Heart right ventricle (tissue), 16 donors: ENCODE measurements at regions of chr6 and their contacts with region 1.

Region 1: DNA sequence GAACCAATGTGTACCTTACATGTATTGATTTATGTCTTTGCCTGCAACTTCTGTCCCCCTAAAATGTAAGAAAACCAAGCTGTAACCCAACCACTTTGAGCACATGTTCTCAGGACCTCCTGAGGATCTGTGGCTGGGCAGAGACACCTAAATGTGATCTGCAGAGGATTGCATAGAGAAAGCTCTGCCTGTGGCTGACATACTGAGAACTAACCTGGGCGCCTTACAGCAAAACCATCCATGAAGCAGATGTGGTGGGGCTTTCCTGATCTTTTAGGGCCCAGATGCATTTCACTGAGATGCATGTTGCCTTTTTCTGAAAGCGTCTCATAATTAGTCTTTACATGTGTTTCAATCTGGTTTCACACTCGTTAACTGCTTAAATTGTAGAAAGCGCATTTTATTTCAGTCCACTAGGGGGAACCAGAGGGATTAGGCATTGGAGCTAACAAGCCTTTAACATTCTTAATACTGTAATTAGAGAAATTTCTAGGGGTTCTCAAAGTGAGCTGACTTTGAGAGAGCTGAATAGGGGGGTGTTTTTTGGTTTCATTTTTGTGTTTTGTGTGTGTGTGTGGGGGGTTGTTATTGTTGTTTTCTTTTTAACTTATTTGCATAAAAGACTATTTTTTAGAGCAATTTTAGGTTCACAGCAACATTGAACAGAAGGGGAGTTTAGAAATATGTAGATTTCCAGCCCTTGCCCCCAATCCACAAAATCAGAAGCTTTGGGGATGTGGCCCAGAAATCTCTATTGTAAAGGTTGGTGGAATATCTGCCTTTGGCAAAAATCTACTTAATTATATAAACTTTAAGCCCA is 50.9 kb upstream of the FAM184A start:
- DNase-seq: peak in 1 of 2 donors; percentile 30
- ATAC-seq: peak in 5 of 8 donors; percentile 46 to 75 (median 62)
- H3K4me3 ChIP-seq: no peak overlapping the region
- H3K27ac ChIP-seq: no peak overlapping the region
- H3K4me1 ChIP-seq: peaks cover 0 to 19% (median 5%) of the 10 kb centered on the region in 9 donors
- H3K27me3 ChIP-seq: no peaks in the 10 kb centered on the region
- CTCF ChIP-seq: peak; percentile 78 to 89 (median 82)

Region 2: GRCh38 chr6:119653329-119653728 is 524.0 kb after region 1 on chr6:
- intact Hi-C with region 1: loop called in 1 of 10 experiments (anchors 10 kb)
- DNase-seq: no peak
- ATAC-seq: no peak
- H3K4me3 ChIP-seq: no peak overlapping the region
- H3K27ac ChIP-seq: no peak overlapping the region
- H3K4me1 ChIP-seq: no peaks in the 10 kb centered on the region
- H3K27me3 ChIP-seq: no peaks in the 10 kb centered on the region
- CTCF ChIP-seq: no peak

Region 3: GRCh38 chr6:119736296-119737021 is 607.1 kb after region 1 on chr6:
- intact Hi-C with region 1: loop called in 1 of 10 experiments (anchors 10 kb)
- DNase-seq: no peak
- ATAC-seq: no peak
- H3K4me3 ChIP-seq: no peak overlapping the region
- H3K27ac ChIP-seq: no peak overlapping the region
- H3K4me1 ChIP-seq: no peaks in the 10 kb centered on the region
- H3K27me3 ChIP-seq: no peaks in the 10 kb centered on the region
- CTCF ChIP-seq: no peak

Region 4: DNA sequence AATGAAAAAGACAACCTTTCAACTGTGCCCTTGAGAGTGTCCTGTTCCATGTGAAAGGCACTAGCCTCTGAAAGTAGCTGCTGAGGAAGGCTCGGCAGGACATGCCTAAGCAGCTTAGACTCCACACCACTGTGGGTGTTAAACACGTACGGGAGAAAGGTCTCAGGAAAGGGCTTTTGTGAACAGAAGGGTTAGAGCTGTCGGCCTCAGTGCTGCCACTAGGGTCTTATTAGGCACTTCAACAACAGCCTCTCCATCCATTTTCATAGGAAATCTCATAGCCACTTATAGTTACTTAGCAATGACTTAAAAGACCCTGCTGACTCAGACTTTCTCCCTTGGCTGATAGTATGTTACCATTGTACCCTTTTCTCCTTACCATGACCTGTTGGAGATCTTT is 1542.2 kb after region 1 on chr6:
- intact Hi-C with region 1: loop called in 1 of 10 experiments (anchors 10 kb)
- DNase-seq: no peak
- ATAC-seq: no peak
- H3K4me3 ChIP-seq: no peak overlapping the region
- H3K27ac ChIP-seq: no peak overlapping the region
- H3K4me1 ChIP-seq: no peaks in the 10 kb centered on the region
- H3K27me3 ChIP-seq: no peaks in the 10 kb centered on the region
- CTCF ChIP-seq: no peak